Dorsolateral prefrontal cortex (tissue), 120 donors: ENCODE measurements at regions of chr12 and their contacts with region 1.

Region 1: GRCh38 chr12:40970320-40970907 is 217.7 kb upstream of the PDZRN4 start:
- DNase-seq: no peak
- H3K4me3 ChIP-seq: no peak overlapping the region
- H3K27ac ChIP-seq: no peak overlapping the region
- H3K27me3 ChIP-seq: no peaks in the 10 kb centered on the region
- CTCF ChIP-seq: peak in 27 of 56 donors; percentile 13 to 62 (median 47)

Region 2: GRCh38 chr12:41067941-41068645 is 97.7 kb after region 1 on chr12:
- intact Hi-C with region 1: loop called in 1 of 2 experiments (anchors 5 kb)
- DNase-seq: no peak
- H3K4me3 ChIP-seq: no peak overlapping the region
- H3K27ac ChIP-seq: no peak overlapping the region
- H3K27me3 ChIP-seq: no peaks in the 10 kb centered on the region
- CTCF ChIP-seq: peak in 12 of 56 donors; percentile 14 to 41 (median 29)